Gastrocnemius medialis (tissue), 4 donors: ENCODE measurements at regions of chr3 and their contacts with region 1.

Region 1: GRCh38 chr3:39168156-39168793 is 14.9 kb upstream of the CSRNP1 start:
- DNase-seq: no peak
- ATAC-seq: no peak
- H3K4me3 ChIP-seq: no peak overlapping the region
- H3K27ac ChIP-seq: no peak overlapping the region
- H3K4me1 ChIP-seq: peaks cover 0 to 6% of the 10 kb centered on the region in 2 donors
- H3K27me3 ChIP-seq: no peaks in the 10 kb centered on the region
- CTCF ChIP-seq: no peak
- POLR2A ChIP-seq: no peak

Region 2: DNA sequence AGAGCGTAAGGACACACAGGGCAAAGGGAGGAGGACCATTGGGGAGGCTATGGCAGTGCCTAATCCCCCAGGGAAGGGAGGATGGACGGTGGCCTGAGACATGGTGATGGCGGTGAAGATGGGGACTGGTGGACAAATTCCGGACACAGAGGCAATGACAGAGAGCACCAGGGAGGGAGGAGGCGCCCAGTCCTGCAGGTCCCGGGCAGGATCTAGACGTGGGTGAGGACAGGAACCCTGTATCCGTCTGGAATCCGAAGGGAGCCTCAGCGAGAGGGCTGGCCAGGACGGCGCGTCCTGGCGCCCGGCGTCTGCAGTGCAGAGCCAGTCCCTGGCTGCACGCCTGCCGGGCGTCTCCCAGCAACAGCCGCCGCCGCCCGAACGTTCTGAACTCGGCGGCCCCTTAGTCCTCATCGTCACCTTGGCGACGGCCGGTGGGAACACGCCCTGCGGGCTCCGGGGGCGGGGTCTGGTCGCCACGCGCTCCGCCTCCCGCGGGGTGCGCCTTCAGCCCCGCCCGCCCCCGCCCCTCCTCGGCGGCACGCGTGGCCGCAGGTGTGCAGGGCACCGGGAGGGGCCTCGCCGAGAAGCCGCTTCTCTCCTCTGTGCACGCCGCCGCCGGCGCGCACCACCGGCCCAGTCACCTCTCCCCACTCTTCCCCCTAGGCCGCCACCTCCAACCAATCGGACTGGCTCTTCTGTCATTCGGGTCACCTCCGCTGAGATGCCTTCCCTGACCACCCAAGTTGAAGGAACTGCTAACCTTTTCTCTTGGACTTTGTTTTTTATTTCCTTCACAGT is 12.5 kb after region 1 on chr3:
- in situ Hi-C with region 1: no loop called
- intact Hi-C with region 1: loop called (anchors 1 kb)
- DNase-seq: peak; percentile 85 to 93
- ATAC-seq: peak; percentile 68 to 70
- H3K4me3 ChIP-seq: peak overlapping the region; percentile 44 to 55 (median 47)
- H3K27ac ChIP-seq: peak overlapping the region; percentile 86 to 100 (median 94)
- H3K4me1 ChIP-seq: peaks cover 47 to 56% of the 10 kb centered on the region in 2 donors
- H3K27me3 ChIP-seq: no peaks in the 10 kb centered on the region
- CTCF ChIP-seq: peak; percentile 12 to 45 (median 31)
- POLR2A ChIP-seq: peak; percentile 47 to 57